Common myeloid progenitor, CD34-positive (primary cell): ENCODE measurements at regions of chr6 and their contacts with region 1.

Region 1: GRCh38 chr6:8059129-8059528 is 5.1 kb downstream of the BLOC1S5 start:
- DNase-seq: peak; percentile 36 to 64 (median 61)
- H3K4me3 ChIP-seq: no peak overlapping the region
- H3K27ac ChIP-seq: no peak overlapping the region
- H3K4me1 ChIP-seq: peaks cover 0 to 12% (median 6%) of the 10 kb centered on the region in 4 experiments
- H3K27me3 ChIP-seq: no peaks in the 10 kb centered on the region

Region 2: GRCh38 chr6:7615611-7616383 is 443.3 kb before region 1 on chr6:
- CTCF ChIA-PET with region 1: interaction called, 12 read pairs
- POLR2A ChIA-PET with region 1: interaction called, 3 read pairs
- DNase-seq: peak; percentile 58 to 76 (median 68)
- H3K4me3 ChIP-seq: peak overlapping the region in 1 of 7 experiments; percentile 64
- H3K27ac ChIP-seq: no peak overlapping the region
- H3K4me1 ChIP-seq: peaks cover 2 to 21% (median 18%) of the 10 kb centered on the region in 4 experiments
- H3K27me3 ChIP-seq: no peaks in the 10 kb centered on the region

Region 3: GRCh38 chr6:7899101-7899888 is 159.8 kb before region 1 on chr6:
- CTCF ChIA-PET with region 1: interaction called, 21 read pairs
- POLR2A ChIA-PET with region 1: no interaction called
- DNase-seq: peak; percentile 24 to 63 (median 54)
- H3K4me3 ChIP-seq: no peak overlapping the region
- H3K27ac ChIP-seq: no peak overlapping the region
- H3K4me1 ChIP-seq: no peaks in the 10 kb centered on the region
- H3K27me3 ChIP-seq: no peaks in the 10 kb centered on the region